Activated B cell treated with CpG ODN at 0.5 μM for 24 hours (primary cell): ENCODE measurements at regions of chr7 and their contacts with region 1.

Region 1: DNA sequence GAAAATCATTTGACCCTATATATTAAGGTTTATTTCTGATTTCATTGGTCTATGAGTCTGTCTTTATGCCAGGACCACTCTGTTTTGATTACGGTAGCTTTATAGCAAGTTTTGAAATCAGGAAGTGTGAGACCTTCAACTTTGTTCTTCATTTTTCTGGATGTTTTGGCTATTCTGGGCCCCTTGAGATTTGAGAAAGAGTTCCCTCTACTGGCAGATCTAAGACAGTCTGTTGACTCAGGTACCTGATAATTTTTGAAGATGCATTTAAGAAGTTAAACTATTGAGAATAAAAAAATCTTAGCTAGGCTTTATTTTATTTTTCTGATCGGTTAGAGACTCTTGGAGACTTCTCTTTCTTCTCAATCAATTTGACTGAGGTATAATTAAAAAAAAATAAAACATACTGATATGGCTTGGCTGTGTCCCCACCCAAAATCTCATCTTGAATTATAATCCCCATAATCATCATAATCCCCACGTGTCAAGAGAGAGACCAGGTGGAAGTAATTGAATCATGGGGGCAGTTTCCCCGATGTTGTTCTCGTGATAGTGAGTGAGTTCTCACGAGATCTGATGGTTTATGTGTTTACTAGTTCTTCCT is 209.2 kb downstream of the SNX10 start:
- DNase-seq: no peak
- ATAC-seq: peak; percentile 76
- H3K4me3 Mint-ChIP-seq: no peak overlapping the region
- H3K27ac Mint-ChIP-seq: no peak overlapping the region
- H3K4me1 Mint-ChIP-seq: no peaks in the 10 kb centered on the region
- H3K27me3 Mint-ChIP-seq: peaks cover 10% of the 10 kb centered on the region
- CTCF ChIP-seq: peak; percentile 29

Region 2: GRCh38 chr7:25862260-25863037 is 638.4 kb before region 1 on chr7:
- CTCF ChIA-PET with region 1: no interaction called
- POLR2A ChIA-PET with region 1: no interaction called
- intact Hi-C with region 1: no loop called
- DNase-seq: peak; percentile 49
- ATAC-seq: peak; percentile 89
- H3K4me3 Mint-ChIP-seq: peak overlapping the region; percentile 35
- H3K27ac Mint-ChIP-seq: peak overlapping the region; percentile 59
- H3K4me1 Mint-ChIP-seq: peaks cover 14% of the 10 kb centered on the region
- H3K27me3 Mint-ChIP-seq: peaks cover 63% of the 10 kb centered on the region
- CTCF ChIP-seq: no peak

Region 3: GRCh38 chr7:26078437-26079336 is 422.2 kb before region 1 on chr7:
- CTCF ChIA-PET with region 1: no interaction called
- POLR2A ChIA-PET with region 1: no interaction called
- intact Hi-C with region 1: loop called (anchors 2 kb)
- DNase-seq: peak; percentile 73
- ATAC-seq: peak; percentile 100
- H3K4me3 Mint-ChIP-seq: no peak overlapping the region
- H3K27ac Mint-ChIP-seq: no peak overlapping the region
- H3K4me1 Mint-ChIP-seq: peaks cover 7% of the 10 kb centered on the region
- H3K27me3 Mint-ChIP-seq: peaks cover 33% of the 10 kb centered on the region
- CTCF ChIP-seq: no peak

Region 4: DNA sequence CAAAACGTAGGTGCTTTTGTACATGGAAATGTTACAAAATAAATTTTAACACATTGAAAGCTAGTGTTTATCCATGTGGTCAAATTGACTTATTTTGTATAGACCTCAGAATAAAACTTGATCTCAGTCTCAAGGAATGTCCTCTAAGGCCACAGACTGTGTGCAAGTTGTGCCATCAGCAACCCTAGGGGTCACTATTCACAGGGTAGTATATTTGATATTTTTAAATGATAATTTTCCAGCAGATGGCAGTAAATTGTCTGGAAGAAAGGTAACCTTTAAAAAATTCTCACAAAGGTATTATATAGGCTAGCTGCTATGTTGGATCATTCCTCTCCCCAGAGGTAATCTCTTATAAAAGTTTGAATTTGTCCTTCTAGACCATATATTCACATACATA is 222.1 kb before region 1 on chr7:
- CTCF ChIA-PET with region 1: no interaction called
- POLR2A ChIA-PET with region 1: no interaction called
- intact Hi-C with region 1: loop called (anchors 10 kb)
- DNase-seq: no peak
- ATAC-seq: peak; percentile 82
- H3K4me3 Mint-ChIP-seq: no peak overlapping the region
- H3K27ac Mint-ChIP-seq: no peak overlapping the region
- H3K4me1 Mint-ChIP-seq: peaks cover 11% of the 10 kb centered on the region
- H3K27me3 Mint-ChIP-seq: peaks cover 3% of the 10 kb centered on the region
- CTCF ChIP-seq: no peak

Region 5: GRCh38 chr7:26376175-26376917 is 124.5 kb before region 1 on chr7:
- CTCF ChIA-PET with region 1: interaction called, 36 read pairs
- POLR2A ChIA-PET with region 1: no interaction called
- intact Hi-C with region 1: loop called (anchors 1 kb)
- DNase-seq: peak; percentile 47
- ATAC-seq: peak; percentile 46
- H3K4me3 Mint-ChIP-seq: peak overlapping the region; percentile 83
- H3K27ac Mint-ChIP-seq: no peak overlapping the region
- H3K4me1 Mint-ChIP-seq: peaks cover 4% of the 10 kb centered on the region
- H3K27me3 Mint-ChIP-seq: peaks cover 2% of the 10 kb centered on the region
- CTCF ChIP-seq: no peak

Region 6: GRCh38 chr7:26398756-26399501 is 101.9 kb before region 1 on chr7:
- CTCF ChIA-PET with region 1: interaction called, 6 read pairs
- POLR2A ChIA-PET with region 1: no interaction called
- intact Hi-C with region 1: loop called (anchors 5 kb)
- DNase-seq: peak; percentile 83
- ATAC-seq: peak; percentile 89
- H3K4me3 Mint-ChIP-seq: peak overlapping the region; percentile 98
- H3K27ac Mint-ChIP-seq: peak overlapping the region; percentile 98
- H3K4me1 Mint-ChIP-seq: peaks cover 36% of the 10 kb centered on the region
- H3K27me3 Mint-ChIP-seq: no peaks in the 10 kb centered on the region
- CTCF ChIP-seq: no peak

Region 7: DNA sequence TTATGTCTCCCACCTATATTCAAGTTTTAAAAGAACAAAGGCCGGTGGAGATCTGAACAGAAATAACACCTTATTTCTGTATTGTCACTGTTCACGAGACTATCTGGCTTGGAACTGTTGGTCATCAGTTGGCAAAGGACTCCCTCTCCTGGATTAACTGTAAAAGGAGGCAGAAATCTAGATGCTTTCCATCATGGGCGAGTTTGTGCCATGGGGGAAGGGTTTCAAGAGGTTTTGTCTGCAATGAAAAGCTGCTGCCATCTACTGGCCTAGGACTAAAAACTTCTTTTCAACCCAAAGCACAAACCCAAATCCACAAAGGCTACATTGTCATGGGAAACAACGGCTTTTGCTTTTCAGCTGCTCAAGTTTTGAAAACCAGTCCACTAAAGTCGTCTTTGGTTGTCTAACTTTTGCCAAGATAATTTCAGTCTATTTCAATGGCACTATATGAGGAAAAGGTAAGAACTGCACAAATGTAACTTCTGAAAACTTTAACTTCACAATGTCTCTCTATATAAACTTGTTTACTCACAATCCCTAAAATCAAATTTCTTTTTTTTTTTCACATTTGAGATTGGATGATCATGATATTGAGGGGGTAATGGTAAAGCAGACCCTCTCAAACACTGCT is 166.8 kb after region 1 on chr7:
- CTCF ChIA-PET with region 1: no interaction called
- POLR2A ChIA-PET with region 1: no interaction called
- intact Hi-C with region 1: loop called (anchors 1 kb)
- DNase-seq: no peak
- ATAC-seq: peak; percentile 60
- H3K4me3 Mint-ChIP-seq: no peak overlapping the region
- H3K27ac Mint-ChIP-seq: no peak overlapping the region
- H3K4me1 Mint-ChIP-seq: peaks cover 18% of the 10 kb centered on the region
- H3K27me3 Mint-ChIP-seq: no peaks in the 10 kb centered on the region
- CTCF ChIP-seq: no peak